BJ (cell line): ENCODE measurements at regions of chr2 and their contacts with region 1.

Region 1: GRCh38 chr2:70340921-70341765 is 39.3 kb upstream of the FAM136A start:
- DNase-seq: no peak
- H3K4me3 ChIP-seq: no peak overlapping the region
- H3K27me3 ChIP-seq: no peaks in the 10 kb centered on the region
- CTCF ChIP-seq: peak; percentile 82

Region 2: GRCh38 chr2:70270323-70270722 is 70.8 kb before region 1 on chr2:
- CTCF ChIA-PET with region 1: no interaction called
- POLR2A ChIA-PET with region 1: no interaction called
- DNase-seq: no peak
- H3K4me3 ChIP-seq: no peak overlapping the region
- H3K27me3 ChIP-seq: no peaks in the 10 kb centered on the region
- CTCF ChIP-seq: no peak

Region 3: GRCh38 chr2:70321370-70321769 is 19.8 kb before region 1 on chr2:
- CTCF ChIA-PET with region 1: interaction called, 24 read pairs
- POLR2A ChIA-PET with region 1: no interaction called
- DNase-seq: no peak
- H3K4me3 ChIP-seq: no peak overlapping the region
- H3K27me3 ChIP-seq: peaks cover 4% of the 10 kb centered on the region
- CTCF ChIP-seq: no peak

Region 4: DNA sequence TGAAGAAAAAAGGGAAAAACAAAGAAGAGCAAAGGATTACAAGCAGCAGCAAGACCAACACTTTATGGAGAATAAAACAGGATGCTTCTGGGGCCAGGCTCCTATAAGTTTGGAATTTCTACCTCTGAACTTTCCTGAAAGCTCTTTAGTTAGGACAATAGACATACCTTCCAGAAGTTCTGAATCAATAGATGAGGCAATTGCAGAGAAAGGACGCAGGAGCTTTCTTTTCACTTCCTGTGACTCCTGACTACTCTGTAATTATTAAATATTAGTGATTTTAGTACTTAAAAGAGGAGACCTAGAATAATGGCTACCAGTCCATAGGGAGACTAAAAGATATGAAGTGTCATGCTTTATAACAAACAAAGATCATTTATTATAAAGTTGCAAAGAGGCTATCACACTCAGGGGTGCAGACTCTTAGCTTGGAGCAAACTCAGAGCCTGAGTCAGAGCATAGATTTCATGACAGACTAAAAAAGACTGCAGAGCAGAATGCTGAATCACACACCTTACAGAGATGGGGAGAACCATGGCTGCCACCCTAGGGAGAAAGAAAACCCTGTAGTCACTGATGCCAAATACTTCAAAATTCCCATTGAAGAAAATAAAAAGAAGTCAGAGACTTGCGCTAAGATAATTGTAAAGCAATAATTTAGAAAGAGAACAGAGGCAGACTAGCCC is 13.3 kb after region 1 on chr2:
- CTCF ChIA-PET with region 1: interaction called, 12 read pairs
- POLR2A ChIA-PET with region 1: no interaction called
- DNase-seq: no peak
- H3K4me3 ChIP-seq: no peak overlapping the region
- H3K27me3 ChIP-seq: no peaks in the 10 kb centered on the region
- CTCF ChIP-seq: no peak

Region 5: GRCh38 chr2:70627211-70627902 is 286.2 kb after region 1 on chr2:
- CTCF ChIA-PET with region 1: interaction called, 12 read pairs
- POLR2A ChIA-PET with region 1: no interaction called
- DNase-seq: no peak
- H3K4me3 ChIP-seq: no peak overlapping the region
- H3K27me3 ChIP-seq: peaks cover 6% of the 10 kb centered on the region
- CTCF ChIP-seq: no peak

Region 6: DNA sequence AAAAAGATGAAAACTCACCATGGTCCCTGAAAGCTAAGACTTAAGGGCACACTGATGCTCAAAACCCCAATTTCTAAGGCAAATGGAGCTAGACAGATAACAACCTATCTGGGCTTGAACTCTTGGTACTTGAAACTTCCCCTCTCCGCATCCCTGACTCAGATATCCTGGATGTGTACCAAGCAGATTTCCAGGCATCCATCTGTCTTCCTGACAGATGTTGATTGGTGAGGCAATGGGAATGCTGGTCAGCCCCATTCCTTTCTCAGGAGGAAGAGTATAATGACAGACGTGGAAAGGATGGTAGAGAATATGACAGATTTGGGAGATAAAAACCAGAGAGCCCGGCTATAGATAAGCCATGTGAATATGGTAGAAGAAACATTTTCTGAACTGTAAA is 357.7 kb after region 1 on chr2:
- CTCF ChIA-PET with region 1: no interaction called
- POLR2A ChIA-PET with region 1: no interaction called
- DNase-seq: no peak
- H3K4me3 ChIP-seq: no peak overlapping the region
- H3K27me3 ChIP-seq: peaks cover 7% of the 10 kb centered on the region
- CTCF ChIP-seq: no peak